Activated CD4-positive, alpha-beta memory T cell treated with anti-CD3 and anti-CD28 coated beads for 36 hours (primary cell): ENCODE measurements at regions of chr22 and their contacts with region 1.

Region 1: DNA sequence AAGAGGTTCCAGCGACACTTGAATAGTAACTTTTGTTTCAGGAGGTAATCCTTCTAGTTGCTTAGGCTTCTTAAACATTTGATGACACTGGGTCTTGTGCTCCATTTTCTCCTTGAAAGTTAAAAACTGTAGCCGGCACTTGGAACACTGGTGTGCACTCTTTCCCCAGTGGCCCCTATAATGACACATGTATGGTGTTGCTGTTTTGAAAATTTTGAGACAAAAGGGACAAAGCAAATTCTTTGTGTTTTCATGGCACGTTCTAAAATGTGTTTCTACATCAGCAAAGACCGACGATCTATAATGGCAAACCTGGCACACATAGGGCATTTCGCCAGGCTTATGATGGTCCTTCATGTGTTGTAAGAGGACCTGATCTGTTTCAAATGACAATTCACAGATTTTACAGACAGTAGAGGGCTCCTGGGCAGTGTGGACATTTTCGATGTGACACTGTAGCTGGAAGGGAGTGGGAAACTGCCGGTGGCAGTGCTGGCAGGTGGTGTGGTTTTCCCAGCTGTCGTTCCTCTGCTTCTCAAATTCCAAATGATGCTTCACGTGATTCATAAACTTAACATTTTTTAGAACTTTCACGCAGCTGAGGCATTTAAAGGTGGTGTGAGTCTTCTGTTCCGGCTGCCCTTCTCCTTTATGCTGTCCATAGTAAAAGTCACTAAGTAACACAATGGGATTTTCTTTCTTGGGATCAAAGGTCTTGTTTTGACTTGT is 20.5 kb downstream of the ZNF280B start:
- DNase-seq: no peak
- H3K4me3 Mint-ChIP-seq: no peak overlapping the region
- H3K27ac Mint-ChIP-seq: no peak overlapping the region
- H3K4me1 Mint-ChIP-seq: no peaks in the 10 kb centered on the region
- H3K27me3 Mint-ChIP-seq: no peaks in the 10 kb centered on the region

Region 2: GRCh38 chr22:22508274-22509176 is 20.5 kb after region 1 on chr22 and contains the start of gene ZNF280B:
- CTCF ChIA-PET with region 1: interaction called, 10 read pairs
- POLR2A ChIA-PET with region 1: no interaction called
- intact Hi-C with region 1: no loop called
- DNase-seq: peak; percentile 90
- H3K4me3 Mint-ChIP-seq: peak within 1 kb of the TSS; percentile 65
- H3K27ac Mint-ChIP-seq: no peak within 1 kb of the TSS
- H3K4me1 Mint-ChIP-seq: peaks cover 18% of the 10 kb centered on the region
- H3K27me3 Mint-ChIP-seq: peaks cover 3% of the 10 kb centered on the region
- total RNA-seq, gene ZNF280B: 2.1 to 2.4 TPM